Endothelial cell of umbilical vein (primary cell): ENCODE measurements at regions of chr12 and their contacts with region 1.

Region 1: DNA sequence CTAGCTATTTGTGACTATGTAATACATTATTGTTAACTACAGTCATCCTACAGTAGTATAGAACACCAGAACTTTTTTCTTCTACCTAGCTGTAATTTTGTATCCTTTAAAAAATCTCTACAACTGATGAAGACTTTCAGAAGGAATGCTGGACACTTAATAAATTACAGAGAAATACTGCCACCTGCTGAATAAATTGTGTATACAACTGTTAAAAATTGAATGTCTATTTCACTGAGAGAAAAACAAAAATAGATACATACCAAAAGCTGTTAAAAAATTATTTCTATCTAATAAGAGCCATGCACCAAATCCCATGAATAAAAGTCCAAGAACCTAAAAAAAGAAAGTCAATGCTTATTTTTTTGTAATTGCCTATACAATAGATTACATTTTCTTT is 6.6 kb downstream of the TSPAN19 start:
- DNase-seq: peak; percentile 30
- H3K4me3 ChIP-seq: no peak overlapping the region
- H3K27ac ChIP-seq: no peak overlapping the region
- H3K4me1 ChIP-seq: no peaks in the 10 kb centered on the region
- H3K27me3 ChIP-seq: peaks cover 8 to 40% of the 10 kb centered on the region in 2 experiments
- CTCF ChIP-seq: peak; percentile 13 to 14
- POLR2A ChIP-seq: no peak

Region 2: GRCh38 chr12:84842406-84843013 is 186.9 kb before region 1 on chr12:
- CTCF ChIA-PET with region 1: interaction called, 17 read pairs
- POLR2A ChIA-PET with region 1: no interaction called
- dilution Hi-C with region 1: no loop called
- intact Hi-C with region 1: no loop called
- DNase-seq: peak; percentile 55
- H3K4me3 ChIP-seq: no peak overlapping the region
- H3K27ac ChIP-seq: no peak overlapping the region
- H3K4me1 ChIP-seq: no peaks in the 10 kb centered on the region
- H3K27me3 ChIP-seq: no peaks in the 10 kb centered on the region
- CTCF ChIP-seq: peak; percentile 38 to 45
- POLR2A ChIP-seq: no peak

Region 3: DNA sequence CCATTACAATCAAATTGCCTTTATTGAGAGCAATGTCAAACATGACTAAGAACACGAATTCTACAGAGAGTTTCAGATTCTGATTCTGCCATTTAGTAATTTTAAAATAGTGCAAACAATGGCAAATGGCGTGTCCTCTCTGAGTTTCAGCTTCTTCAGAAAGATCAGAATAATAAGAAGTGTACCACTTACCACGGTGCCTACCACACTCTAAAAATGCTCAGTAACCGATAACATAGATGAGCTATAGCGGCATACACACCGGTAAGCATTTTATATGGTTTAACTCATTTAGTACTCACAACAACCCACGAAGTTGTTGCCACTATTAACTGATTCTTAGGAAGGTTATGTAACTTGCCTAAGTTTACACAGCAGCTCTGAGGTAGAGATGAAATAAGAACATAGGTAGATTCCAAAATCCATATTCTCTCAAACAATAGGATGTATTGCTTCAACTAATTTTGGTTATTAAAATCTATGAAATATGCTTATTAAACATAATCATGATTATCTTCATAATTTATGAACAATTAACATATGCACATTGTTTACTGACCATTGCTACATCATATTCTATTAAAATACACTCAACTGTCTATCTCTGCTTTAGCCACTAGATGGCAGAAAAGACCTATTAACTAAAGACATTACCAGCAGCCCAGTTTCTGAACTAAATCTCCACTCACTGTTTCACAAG is 155.2 kb before region 1 on chr12:
- CTCF ChIA-PET with region 1: interaction called, 646 read pairs
- POLR2A ChIA-PET with region 1: no interaction called
- dilution Hi-C with region 1: no loop called
- intact Hi-C with region 1: loop called (anchors 1 kb)
- DNase-seq: peak; percentile 55
- H3K4me3 ChIP-seq: no peak overlapping the region
- H3K27ac ChIP-seq: no peak overlapping the region
- H3K4me1 ChIP-seq: no peaks in the 10 kb centered on the region
- H3K27me3 ChIP-seq: peaks cover 0 to 2% of the 10 kb centered on the region in 2 experiments
- CTCF ChIP-seq: peak; percentile 45 to 49
- POLR2A ChIP-seq: no peak

Region 4: DNA sequence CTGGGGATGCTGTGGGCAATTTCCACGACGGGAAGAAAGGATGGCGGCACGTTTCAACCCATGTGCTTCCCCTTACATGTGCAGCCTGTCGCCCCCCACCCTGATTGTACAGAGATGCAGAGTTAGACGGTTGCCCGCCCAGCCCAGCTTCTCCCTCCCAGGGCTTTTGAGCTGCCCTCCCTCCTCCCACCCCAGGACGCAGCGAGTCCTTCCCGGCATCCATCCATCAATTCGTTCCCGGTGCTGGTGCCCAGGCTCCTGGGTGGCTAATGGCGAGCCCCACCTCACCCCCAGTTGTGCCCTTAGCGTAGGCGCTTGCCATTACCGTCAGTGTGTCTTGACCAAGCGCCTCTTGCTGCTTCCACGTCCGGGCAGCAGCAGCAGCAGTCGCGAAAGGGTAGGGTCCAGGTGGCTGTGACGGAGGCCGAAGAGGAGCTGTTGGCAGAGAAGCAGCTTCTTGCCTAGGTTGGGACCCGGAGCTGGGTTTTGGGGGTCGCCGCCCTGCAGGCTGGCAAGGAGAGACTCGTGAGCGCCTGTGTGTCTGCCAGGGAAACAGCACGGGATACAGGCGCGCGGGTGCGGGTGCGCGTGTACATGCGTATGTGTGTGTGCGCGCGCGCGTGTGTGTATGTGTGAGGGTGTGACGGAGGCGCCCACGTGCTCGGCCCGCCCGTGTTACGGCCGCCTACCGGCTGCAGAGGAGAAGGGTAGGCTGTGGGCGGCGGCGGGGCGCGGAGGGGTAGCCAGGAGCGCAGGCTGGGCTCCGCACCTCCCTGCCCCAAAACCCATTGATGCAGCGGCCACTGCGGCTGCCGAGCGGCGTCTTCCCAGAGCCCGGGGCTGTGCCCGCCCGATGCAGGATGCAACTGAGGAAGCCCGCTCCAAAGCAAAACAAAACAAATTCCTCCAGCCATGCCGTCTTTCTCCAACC is 117.0 kb before region 1 on chr12 and contains the start of gene SLC6A15:
- CTCF ChIA-PET with region 1: interaction called, 43 read pairs
- POLR2A ChIA-PET with region 1: no interaction called
- dilution Hi-C with region 1: no loop called
- intact Hi-C with region 1: no loop called
- DNase-seq: peak; percentile 27
- H3K4me3 ChIP-seq: peak within 1 kb of the TSS; percentile 40 to 71 (median 70)
- H3K27ac ChIP-seq: no peak within 1 kb of the TSS
- H3K4me1 ChIP-seq: peaks cover 23% of the 10 kb centered on the region
- H3K27me3 ChIP-seq: peaks cover 19 to 34% of the 10 kb centered on the region in 2 experiments
- CTCF ChIP-seq: peak; percentile 42 to 51
- POLR2A ChIP-seq: no peak
- total RNA-seq, gene SLC6A15: 0.24 and 1.1 TPM in 2 replicates

Region 5: GRCh38 chr12:84974155-84974815 is 55.2 kb before region 1 on chr12:
- CTCF ChIA-PET with region 1: interaction called, 11 read pairs
- POLR2A ChIA-PET with region 1: no interaction called
- dilution Hi-C with region 1: no loop called
- intact Hi-C with region 1: no loop called
- DNase-seq: no peak
- H3K4me3 ChIP-seq: no peak overlapping the region
- H3K27ac ChIP-seq: no peak overlapping the region
- H3K4me1 ChIP-seq: no peaks in the 10 kb centered on the region
- H3K27me3 ChIP-seq: peaks cover 0 to 2% of the 10 kb centered on the region in 2 experiments
- CTCF ChIP-seq: no peak
- POLR2A ChIP-seq: no peak

Region 6: GRCh38 chr12:84995646-84996045 is 33.8 kb before region 1 on chr12:
- CTCF ChIA-PET with region 1: interaction called, 24 read pairs
- POLR2A ChIA-PET with region 1: no interaction called
- dilution Hi-C with region 1: no loop called
- intact Hi-C with region 1: no loop called
- DNase-seq: peak; percentile 16
- H3K4me3 ChIP-seq: no peak overlapping the region
- H3K27ac ChIP-seq: no peak overlapping the region
- H3K4me1 ChIP-seq: peaks cover 6% of the 10 kb centered on the region
- H3K27me3 ChIP-seq: no peaks in the 10 kb centered on the region
- CTCF ChIP-seq: no peak
- POLR2A ChIP-seq: no peak

Region 7: DNA sequence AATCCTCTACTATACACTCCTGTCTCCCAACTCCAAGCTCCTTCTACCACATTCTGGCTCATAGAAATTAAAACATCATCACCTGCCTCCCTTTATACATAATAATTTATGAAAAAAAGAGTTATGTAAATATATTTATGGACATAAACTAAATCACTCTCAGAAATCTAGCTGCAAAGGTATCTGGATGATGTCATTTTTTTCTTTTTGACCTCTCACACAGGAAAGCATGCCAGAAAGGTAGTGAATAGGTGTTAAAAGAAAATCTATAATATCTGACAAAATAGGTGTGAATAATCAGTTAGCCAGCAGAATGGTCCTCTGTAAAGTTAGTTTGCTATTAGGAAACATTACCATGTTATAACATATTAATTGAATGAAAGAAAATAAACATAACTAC is 14.4 kb after region 1 on chr12:
- CTCF ChIA-PET with region 1: interaction called, 26 read pairs
- POLR2A ChIA-PET with region 1: no interaction called
- dilution Hi-C with region 1: no loop called
- intact Hi-C with region 1: no loop called
- DNase-seq: no peak
- H3K4me3 ChIP-seq: no peak overlapping the region
- H3K27ac ChIP-seq: no peak overlapping the region
- H3K4me1 ChIP-seq: no peaks in the 10 kb centered on the region
- H3K27me3 ChIP-seq: no peaks in the 10 kb centered on the region
- CTCF ChIP-seq: no peak
- POLR2A ChIP-seq: no peak

Region 8: GRCh38 chr12:85092814-85093370 is 63.4 kb after region 1 on chr12:
- CTCF ChIA-PET with region 1: no interaction called
- POLR2A ChIA-PET with region 1: no interaction called
- dilution Hi-C with region 1: no loop called
- intact Hi-C with region 1: no loop called
- DNase-seq: no peak
- H3K4me3 ChIP-seq: no peak overlapping the region
- H3K27ac ChIP-seq: no peak overlapping the region
- H3K4me1 ChIP-seq: no peaks in the 10 kb centered on the region
- H3K27me3 ChIP-seq: peaks cover 0 to 2% of the 10 kb centered on the region in 2 experiments
- CTCF ChIP-seq: no peak
- POLR2A ChIP-seq: no peak

Region 9: GRCh38 chr12:85322715-85323114 is 293.3 kb after region 1 on chr12:
- CTCF ChIA-PET with region 1: no interaction called
- POLR2A ChIA-PET with region 1: no interaction called
- dilution Hi-C with region 1: no loop called
- intact Hi-C with region 1: no loop called
- DNase-seq: no peak
- H3K4me3 ChIP-seq: no peak overlapping the region
- H3K27ac ChIP-seq: no peak overlapping the region
- H3K4me1 ChIP-seq: no peaks in the 10 kb centered on the region
- H3K27me3 ChIP-seq: no peaks in the 10 kb centered on the region
- CTCF ChIP-seq: no peak
- POLR2A ChIP-seq: no peak